BJ (cell line): ENCODE measurements at regions of chr6 and their contacts with region 1.

Region 1: GRCh38 chr6:3281631-3282475 is 23.1 kb downstream of the PSMG4 start:
- DNase-seq: peak; percentile 25
- H3K4me3 ChIP-seq: no peak overlapping the region
- H3K27me3 ChIP-seq: no peaks in the 10 kb centered on the region
- CTCF ChIP-seq: no peak

Region 2: GRCh38 chr6:3410385-3411360 is 128.8 kb after region 1 on chr6:
- CTCF ChIA-PET with region 1: interaction called, 11 read pairs
- POLR2A ChIA-PET with region 1: no interaction called
- DNase-seq: no peak
- H3K4me3 ChIP-seq: no peak overlapping the region
- H3K27me3 ChIP-seq: no peaks in the 10 kb centered on the region
- CTCF ChIP-seq: peak; percentile 86

Region 3: GRCh38 chr6:3721810-3722626 is 440.2 kb after region 1 on chr6:
- CTCF ChIA-PET with region 1: interaction called, 17 read pairs
- POLR2A ChIA-PET with region 1: no interaction called
- DNase-seq: peak; percentile 34
- H3K4me3 ChIP-seq: no peak overlapping the region
- H3K27me3 ChIP-seq: no peaks in the 10 kb centered on the region
- CTCF ChIP-seq: no peak